Activated CD4-positive, alpha-beta memory T cell treated with anti-CD3 and anti-CD28 coated beads, Interleukin-2, amount 10 ng/mL, durations not matched to agents 7 days and 5 days (primary cell): ENCODE measurements at regions of chr7 and their contacts with region 1.

Region 1: DNA sequence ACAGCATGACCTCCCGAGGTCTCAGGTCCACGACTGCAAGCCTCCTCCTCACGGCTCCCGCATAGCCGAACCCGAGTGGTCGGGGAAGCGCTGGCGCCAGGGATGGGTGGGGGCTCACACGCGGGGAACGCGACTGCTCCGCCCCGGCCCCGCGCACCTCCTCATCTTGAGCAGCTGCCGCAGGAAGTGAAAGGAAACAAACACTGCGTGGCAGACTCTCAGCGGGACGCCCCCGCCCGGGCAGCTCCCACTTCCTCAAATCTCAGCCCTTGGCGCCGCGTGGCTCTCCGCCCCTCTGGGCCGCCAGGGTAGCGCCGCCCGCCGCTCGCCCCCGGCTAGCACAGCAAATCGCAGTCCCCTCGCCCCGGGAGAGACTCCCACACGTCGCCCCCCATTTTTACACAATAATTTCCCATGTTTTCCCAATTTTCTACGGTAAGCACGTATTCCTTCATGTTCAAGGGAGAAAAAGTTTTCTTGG is at the start of gene TMEM243:
- DNase-seq: peak; percentile 86
- H3K4me3 Mint-ChIP-seq: peak within 1 kb of the TSS; percentile 99
- H3K27ac Mint-ChIP-seq: peak within 1 kb of the TSS; percentile 95
- H3K4me1 Mint-ChIP-seq: peaks cover 36% of the 10 kb centered on the region
- H3K27me3 Mint-ChIP-seq: peaks cover 9% of the 10 kb centered on the region
- total RNA-seq, gene TMEM243: 42.1 to 42.5 TPM

Region 2: DNA sequence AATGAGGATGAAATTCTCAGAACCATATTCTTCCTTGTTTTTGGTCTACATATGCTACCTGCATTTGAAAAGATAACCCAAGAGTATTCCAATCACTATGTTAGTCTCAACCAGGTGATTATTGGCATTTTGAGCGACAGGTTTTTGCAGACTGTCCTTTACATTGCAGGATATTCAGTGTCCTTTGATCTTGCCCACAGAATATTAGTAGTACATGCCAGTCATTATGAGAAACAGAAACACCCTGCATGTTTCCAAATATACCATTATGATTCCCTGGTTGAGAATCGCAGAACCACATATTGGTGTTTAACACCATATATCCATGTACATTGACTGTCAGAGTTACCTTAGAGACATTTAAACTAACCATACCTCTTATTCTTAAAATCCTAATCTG is 30.7 kb before region 1 on chr7:
- CTCF ChIA-PET with region 1: interaction called, 4 read pairs
- POLR2A ChIA-PET with region 1: interaction called, 11 read pairs
- DNase-seq: no peak
- H3K4me3 Mint-ChIP-seq: no peak overlapping the region
- H3K27ac Mint-ChIP-seq: no peak overlapping the region
- H3K4me1 Mint-ChIP-seq: peaks cover 15% of the 10 kb centered on the region
- H3K27me3 Mint-ChIP-seq: no peaks in the 10 kb centered on the region

Region 3: DNA sequence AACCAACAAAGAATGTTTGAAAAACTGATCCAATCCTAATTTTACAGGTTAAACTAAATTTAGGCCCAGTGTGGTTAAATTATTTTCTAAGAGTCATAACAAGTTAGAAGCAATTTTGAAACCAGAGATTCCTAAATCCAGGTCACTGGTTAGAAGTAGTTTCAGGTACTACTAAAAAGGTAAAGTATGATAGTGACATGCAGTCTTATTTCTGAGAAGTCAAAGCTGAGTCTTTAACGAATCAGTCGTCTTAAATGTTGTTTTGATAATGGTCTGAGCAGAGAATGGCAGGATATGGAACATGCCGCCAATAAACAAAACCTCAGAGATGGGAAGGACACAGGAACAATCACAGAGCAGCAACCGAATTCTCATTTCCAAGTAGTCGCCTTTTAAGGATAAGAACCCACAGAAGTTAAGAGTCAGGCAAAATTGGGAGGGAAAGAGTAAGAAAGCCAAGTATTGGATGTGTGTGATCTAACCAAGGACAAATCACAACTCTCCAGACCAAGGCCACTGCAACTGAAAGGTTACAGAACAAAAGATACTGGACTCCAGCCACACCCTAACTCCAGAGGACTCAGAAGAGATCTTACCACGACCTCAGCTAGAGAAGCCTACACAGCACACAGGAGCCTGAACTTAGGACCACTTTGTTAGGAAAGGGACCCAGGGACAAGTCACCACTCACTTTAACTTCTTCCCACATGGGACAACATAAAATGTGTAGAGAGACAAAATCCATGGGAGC is 19.7 kb before region 1 on chr7:
- CTCF ChIA-PET with region 1: no interaction called
- POLR2A ChIA-PET with region 1: interaction called, 11 read pairs
- DNase-seq: no peak
- H3K4me3 Mint-ChIP-seq: no peak overlapping the region
- H3K27ac Mint-ChIP-seq: no peak overlapping the region
- H3K4me1 Mint-ChIP-seq: peaks cover 25% of the 10 kb centered on the region
- H3K27me3 Mint-ChIP-seq: no peaks in the 10 kb centered on the region

Region 4: GRCh38 chr7:87206361-87206760 is 13.2 kb before region 1 on chr7:
- CTCF ChIA-PET with region 1: interaction called, 3 read pairs
- POLR2A ChIA-PET with region 1: interaction called, 30 read pairs
- DNase-seq: no peak
- H3K4me3 Mint-ChIP-seq: no peak overlapping the region
- H3K27ac Mint-ChIP-seq: no peak overlapping the region
- H3K4me1 Mint-ChIP-seq: peaks cover 21% of the 10 kb centered on the region
- H3K27me3 Mint-ChIP-seq: no peaks in the 10 kb centered on the region

Region 5: DNA sequence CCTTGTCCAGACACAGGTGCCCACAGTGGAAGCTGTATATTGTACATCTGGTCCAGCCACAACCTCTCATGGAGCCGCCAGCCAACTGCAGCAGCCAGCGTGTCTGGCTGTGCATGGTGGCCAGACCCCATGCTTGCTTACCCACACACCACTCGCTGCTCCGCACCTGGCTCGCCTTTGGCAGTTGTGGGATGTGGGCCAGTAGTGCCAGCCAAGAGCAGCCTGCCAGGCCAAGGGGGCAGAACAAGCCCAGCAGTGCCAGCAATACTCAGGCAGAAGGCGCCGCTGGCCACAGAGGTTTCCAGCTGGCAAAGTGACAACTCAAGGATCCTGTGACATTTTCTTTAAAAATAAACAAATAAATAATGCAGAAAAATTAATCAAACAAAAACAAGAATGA is 11.7 kb after region 1 on chr7:
- CTCF ChIA-PET with region 1: interaction called, 10 read pairs
- POLR2A ChIA-PET with region 1: interaction called, 16 read pairs
- DNase-seq: no peak
- H3K4me3 Mint-ChIP-seq: no peak overlapping the region
- H3K27ac Mint-ChIP-seq: no peak overlapping the region
- H3K4me1 Mint-ChIP-seq: peaks cover 6% of the 10 kb centered on the region
- H3K27me3 Mint-ChIP-seq: peaks cover 2% of the 10 kb centered on the region